ENCODE measurements at regions of chr1 and their contacts with region 1.

Region 1: DNA sequence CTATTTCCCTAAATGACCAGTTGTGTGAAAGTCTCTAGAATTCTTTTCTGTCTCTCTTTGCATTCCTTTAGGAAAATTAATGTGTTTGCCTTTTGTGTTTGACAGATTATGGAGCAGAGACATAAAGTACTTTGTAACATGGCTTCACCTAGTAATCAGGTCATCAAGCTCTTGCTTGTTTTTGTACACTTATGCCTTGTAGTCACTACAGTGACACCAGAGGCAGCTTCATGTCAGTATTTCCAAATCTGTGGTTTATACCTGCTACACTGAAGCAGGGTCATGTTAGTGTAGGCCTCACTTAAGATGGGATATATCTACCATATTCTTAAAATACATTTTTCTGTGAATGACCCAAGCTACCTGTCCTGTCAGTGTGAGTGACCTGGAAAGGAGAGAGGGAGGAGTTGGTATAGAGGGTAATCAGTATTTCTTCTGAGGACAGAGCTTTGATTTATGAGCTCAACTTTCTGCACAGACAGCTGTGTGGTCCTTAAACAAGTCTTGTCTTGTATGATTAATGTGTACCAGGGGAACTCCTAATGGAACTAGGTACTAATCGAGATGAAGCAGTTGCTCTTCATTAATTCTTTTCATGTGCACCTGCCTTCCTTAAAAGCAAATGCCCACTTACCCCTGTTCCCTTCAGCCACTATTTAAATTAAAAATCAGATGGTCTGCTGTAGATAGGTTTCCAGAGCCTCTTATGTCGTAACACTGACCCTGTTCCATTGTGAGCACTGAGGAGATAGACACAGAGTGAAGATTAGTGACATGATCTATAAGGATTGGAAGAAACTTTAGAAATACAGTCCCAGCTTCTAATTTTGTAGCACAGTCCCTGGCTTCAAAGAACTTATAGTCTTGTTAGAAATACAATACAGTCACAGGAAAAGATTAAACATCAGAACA is 45.7 kb downstream of the MACO1 start:
- DNase-seq: peak; percentile 5
- H3K4me3 Mint-ChIP-seq: no peak overlapping the region
- H3K27ac Mint-ChIP-seq: peak overlapping the region; percentile 1
- H3K4me1 Mint-ChIP-seq: peaks cover 12% of the 10 kb centered on the region
- H3K27me3 Mint-ChIP-seq: no peaks in the 10 kb centered on the region
- CTCF ChIP-seq: no peak

Region 2: GRCh38 chr1:25343872-25344271 is 132.6 kb before region 1 on chr1:
- CTCF ChIA-PET with region 1: no interaction called
- POLR2A ChIA-PET with region 1: no interaction called
- intact Hi-C with region 1: no loop called
- DNase-seq: peak; percentile 77
- H3K4me3 Mint-ChIP-seq: no peak overlapping the region
- H3K27ac Mint-ChIP-seq: peak overlapping the region; percentile 10
- H3K4me1 Mint-ChIP-seq: peaks cover 17% of the 10 kb centered on the region
- H3K27me3 Mint-ChIP-seq: no peaks in the 10 kb centered on the region
- CTCF ChIP-seq: no peak

Region 3: DNA sequence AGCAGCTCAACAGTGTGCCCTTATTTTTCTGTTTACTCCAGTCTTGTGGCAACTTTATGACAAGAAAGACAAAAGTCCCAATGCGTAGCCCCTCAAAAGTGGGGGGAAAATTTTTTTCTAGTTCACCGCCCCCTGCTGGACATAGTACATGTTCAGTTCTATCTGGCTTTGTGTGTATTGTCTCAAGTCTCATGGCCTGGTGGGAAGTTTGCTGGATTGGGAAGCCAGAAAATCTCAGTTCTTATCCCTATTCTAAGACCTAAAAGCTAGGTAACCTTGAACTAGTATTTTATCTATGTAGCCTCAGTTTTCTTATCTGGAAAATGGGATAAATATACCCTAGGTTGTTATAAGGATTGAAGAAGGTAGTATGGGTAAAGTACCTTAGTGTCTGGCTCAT is 11.2 kb after region 1 on chr1:
- CTCF ChIA-PET with region 1: interaction called, 16 read pairs
- POLR2A ChIA-PET with region 1: interaction called, 3 read pairs
- intact Hi-C with region 1: no loop called
- DNase-seq: no peak
- H3K4me3 Mint-ChIP-seq: no peak overlapping the region
- H3K27ac Mint-ChIP-seq: no peak overlapping the region
- H3K4me1 Mint-ChIP-seq: peaks cover under 1% of the 10 kb centered on the region
- H3K27me3 Mint-ChIP-seq: no peaks in the 10 kb centered on the region
- CTCF ChIP-seq: peak; percentile 44

Region 4: DNA sequence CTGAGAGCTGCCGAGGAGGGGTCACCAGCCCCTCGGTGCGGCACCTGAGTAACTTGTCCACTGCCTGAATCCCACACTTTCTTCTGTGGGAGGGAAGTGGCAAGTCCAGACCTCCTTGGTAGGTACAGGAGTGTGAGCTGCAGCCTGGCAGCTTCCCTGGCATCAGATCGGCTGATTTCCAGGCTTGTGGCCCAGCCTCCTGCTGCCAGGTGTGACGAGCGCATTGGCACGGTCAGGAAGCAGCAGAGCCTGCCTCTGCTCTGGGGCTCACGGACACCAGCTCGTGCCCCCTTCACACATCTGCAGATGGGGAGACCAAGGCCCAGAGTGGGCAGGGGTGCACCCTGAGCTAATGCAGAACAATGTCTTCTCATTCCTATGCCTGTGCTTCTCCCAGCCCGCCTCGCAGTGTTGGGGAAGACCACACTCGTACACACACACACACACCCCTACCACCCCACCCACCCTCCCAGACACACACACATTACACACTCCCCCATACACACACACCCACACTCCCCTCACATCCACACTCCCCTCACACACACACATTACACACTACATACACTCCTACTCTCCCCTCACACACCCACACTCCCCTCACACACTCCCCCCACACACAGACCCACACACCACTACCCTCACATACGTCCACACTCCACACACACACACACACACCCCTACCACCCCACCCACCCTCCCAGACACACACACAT is 290.4 kb after region 1 on chr1:
- CTCF ChIA-PET with region 1: no interaction called
- POLR2A ChIA-PET with region 1: no interaction called
- intact Hi-C with region 1: no loop called
- DNase-seq: no peak
- H3K4me3 Mint-ChIP-seq: no peak overlapping the region
- H3K27ac Mint-ChIP-seq: no peak overlapping the region
- H3K4me1 Mint-ChIP-seq: no peaks in the 10 kb centered on the region
- H3K27me3 Mint-ChIP-seq: no peaks in the 10 kb centered on the region
- CTCF ChIP-seq: no peak

Region 5: DNA sequence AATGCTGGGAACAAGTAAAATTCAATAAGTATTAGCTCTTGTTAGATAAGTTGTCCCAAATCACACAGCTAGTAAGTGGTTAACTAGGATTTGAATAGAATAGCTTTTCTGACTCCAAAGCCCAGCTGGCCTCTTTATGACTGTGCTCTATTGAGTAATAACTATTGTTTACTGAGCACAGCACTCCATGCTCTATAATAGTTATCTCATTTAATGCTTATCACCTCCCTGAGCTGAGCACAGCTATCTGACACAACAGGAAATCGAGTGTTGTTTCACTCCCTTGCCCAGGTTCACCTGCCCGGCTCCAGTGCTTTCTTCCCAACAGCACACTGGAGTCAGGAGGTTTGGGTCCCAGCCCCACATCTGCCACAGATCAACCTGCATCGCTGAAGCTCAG is 468.5 kb after region 1 on chr1:
- CTCF ChIA-PET with region 1: no interaction called
- POLR2A ChIA-PET with region 1: no interaction called
- intact Hi-C with region 1: no loop called
- DNase-seq: no peak
- H3K4me3 Mint-ChIP-seq: no peak overlapping the region
- H3K27ac Mint-ChIP-seq: no peak overlapping the region
- H3K4me1 Mint-ChIP-seq: no peaks in the 10 kb centered on the region
- H3K27me3 Mint-ChIP-seq: no peaks in the 10 kb centered on the region
- CTCF ChIP-seq: no peak

Measured in MCF 10A (cell line).